PC-9 (cell line): ENCODE measurements at regions of chr5 and their contacts with region 1.

Region 1: DNA sequence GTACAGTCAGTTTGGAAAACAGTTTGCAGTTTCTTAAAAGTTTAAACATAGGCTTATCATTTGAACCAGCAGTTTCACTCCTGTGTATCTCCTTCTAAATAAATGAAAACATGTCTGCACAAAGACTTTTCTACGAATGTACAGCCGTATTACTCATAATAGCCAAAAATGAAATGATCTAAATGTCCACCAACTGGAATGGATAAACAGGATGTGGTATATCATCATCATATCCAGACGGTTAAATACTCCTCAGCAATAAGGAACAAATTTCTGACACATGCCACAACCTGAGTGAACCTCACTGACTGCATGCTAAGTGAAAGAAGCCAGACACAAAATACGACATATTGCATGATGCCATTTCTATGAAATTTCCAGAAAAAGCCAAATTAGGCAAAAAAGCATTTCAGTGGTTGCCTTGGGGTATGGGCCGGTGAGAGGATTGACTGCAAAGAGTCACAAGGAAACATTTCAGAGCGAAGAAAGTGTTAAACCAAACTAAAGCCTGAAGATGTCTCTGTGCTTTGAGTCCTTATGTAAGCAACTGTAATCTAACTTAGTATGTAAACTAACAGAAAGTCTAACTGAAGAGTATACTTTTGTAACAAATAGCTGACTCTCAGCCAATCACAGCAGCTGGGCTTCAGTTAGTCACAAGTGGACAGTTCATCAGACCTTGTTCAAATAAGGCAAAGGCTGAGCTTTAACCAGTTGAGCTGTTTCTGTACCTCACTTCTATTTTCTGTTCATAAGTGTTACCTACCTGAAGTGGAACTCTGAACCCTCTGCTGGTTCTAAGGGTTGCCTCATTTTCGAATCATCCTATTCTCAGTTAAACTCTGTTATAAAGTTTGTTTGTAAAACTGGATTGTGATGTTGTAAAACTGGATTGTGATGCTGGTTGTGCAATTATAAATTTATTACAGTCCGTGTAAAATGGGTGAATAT is 65.2 kb downstream of the TRIO start:
- DNase-seq: peak in 1 of 2 experiments; percentile 34
- H3K4me3 ChIP-seq: no peak overlapping the region
- H3K27ac ChIP-seq: peak overlapping the region; percentile 21; the same call in 1 of the 2 replicates
- H3K4me1 ChIP-seq: peaks cover 23% of the 10 kb centered on the region
- H3K27me3 ChIP-seq: no peaks in the 10 kb centered on the region
- CTCF ChIP-seq: no peak

Region 2: DNA sequence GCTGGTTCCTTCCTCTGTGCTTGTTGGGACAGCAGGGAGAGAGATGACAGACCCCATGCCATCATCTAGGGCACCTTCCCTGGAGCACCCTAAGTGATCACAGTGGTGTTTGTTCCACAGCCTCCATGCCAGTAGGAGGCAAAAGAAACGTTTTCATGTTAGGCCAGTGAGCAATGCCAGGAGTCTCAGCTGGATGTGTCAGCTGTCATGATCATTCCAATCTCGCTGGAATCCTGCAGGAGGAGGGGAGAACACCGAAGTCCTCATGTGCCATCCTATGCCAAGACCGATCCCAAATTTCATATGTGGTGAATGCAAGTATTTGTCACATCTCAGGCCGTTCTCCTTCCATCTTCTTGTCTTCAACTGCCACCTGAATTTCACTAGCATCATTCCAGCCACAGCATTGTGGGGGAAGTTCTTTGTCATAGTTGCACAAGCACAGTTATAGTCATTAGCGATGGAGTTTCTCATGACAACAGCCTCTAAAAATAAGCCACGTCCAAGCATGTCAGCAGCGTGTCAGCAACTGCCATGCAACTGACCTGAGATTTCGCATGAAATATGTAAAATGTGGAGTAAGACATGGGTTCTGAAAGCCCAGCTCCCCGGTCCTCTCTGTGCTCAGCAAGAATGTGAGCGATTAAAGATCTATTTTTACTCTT is 166.7 kb before region 1 on chr5:
- CTCF ChIA-PET with region 1: no interaction called
- POLR2A ChIA-PET with region 1: no interaction called
- intact Hi-C with region 1: no loop called
- DNase-seq: no peak
- H3K4me3 ChIP-seq: no peak overlapping the region
- H3K27ac ChIP-seq: no peak overlapping the region
- H3K4me1 ChIP-seq: peaks cover 46% of the 10 kb centered on the region
- H3K27me3 ChIP-seq: no peaks in the 10 kb centered on the region
- CTCF ChIP-seq: no peak

Region 3: DNA sequence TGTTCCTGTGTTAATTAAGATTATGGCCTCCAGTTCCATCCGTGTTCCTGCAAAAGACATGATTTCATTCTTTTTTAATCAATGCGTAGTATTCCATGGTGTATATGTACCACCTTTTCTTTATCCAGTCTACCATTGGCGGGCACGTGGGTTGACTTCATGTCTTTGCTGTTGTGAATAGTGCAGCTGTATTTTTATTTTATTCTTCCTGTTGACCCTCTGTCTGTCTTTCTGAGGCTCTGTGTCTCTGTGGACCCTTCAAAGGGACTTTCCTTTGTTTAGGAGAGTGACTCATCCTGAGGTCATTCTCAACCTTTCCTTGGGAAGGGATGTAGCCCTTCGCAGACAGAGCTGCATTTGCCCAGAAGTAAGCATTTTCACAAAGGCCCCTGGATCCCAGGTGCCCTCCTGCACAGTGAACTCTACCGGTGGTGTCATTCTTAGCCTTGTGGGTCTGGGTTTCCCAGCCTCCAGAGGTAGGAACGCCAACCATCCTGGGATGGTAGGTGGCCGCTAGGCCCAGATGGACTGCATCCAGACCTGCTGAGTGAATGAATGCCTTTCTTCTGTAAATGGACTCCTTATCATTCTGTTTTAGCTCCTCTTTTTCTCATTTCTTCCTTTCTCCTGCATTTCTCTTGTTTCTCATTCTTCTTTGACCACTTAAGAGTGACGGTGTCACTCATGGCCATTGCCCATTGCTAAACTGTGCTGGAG is 42.8 kb before region 1 on chr5:
- CTCF ChIA-PET with region 1: no interaction called
- POLR2A ChIA-PET with region 1: no interaction called
- intact Hi-C with region 1: loop called (anchors 2 kb)
- DNase-seq: peak; percentile 79 to 80
- H3K4me3 ChIP-seq: no peak overlapping the region
- H3K27ac ChIP-seq: peak overlapping the region; percentile 63
- H3K4me1 ChIP-seq: peaks cover 50% of the 10 kb centered on the region
- H3K27me3 ChIP-seq: no peaks in the 10 kb centered on the region
- CTCF ChIP-seq: no peak

Region 4: GRCh38 chr5:14560091-14560595 is 351.8 kb after region 1 on chr5:
- CTCF ChIA-PET with region 1: no interaction called
- POLR2A ChIA-PET with region 1: no interaction called
- intact Hi-C with region 1: no loop called
- DNase-seq: no peak
- H3K4me3 ChIP-seq: no peak overlapping the region
- H3K27ac ChIP-seq: no peak overlapping the region
- H3K4me1 ChIP-seq: no peaks in the 10 kb centered on the region
- H3K27me3 ChIP-seq: peaks cover 13% of the 10 kb centered on the region; the same call in 1 of the 2 replicates
- CTCF ChIP-seq: no peak

Region 5: DNA sequence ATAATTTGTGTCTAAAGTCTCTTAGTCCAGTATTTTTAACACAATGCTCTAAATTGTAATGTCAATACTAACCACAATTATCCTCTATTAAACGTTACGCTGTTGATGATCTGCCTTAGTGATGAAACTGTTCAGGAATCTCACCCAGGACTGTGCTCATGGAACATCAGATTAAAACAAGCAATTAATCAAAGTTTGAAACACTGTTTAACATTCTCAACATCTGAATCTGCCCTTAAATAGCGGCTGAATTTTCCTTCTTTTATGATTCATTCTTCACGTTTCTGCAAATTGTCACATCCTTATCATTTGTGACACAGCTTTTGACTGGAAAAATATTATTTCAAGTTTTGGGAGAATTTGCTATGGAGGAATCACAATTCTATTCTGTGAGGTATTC is 1857.5 kb after region 1 on chr5:
- CTCF ChIA-PET with region 1: no interaction called
- POLR2A ChIA-PET with region 1: no interaction called
- intact Hi-C with region 1: no loop called
- DNase-seq: no peak
- H3K4me3 ChIP-seq: no peak overlapping the region
- H3K27ac ChIP-seq: no peak overlapping the region
- H3K4me1 ChIP-seq: no peaks in the 10 kb centered on the region
- H3K27me3 ChIP-seq: peaks cover 82% of the 10 kb centered on the region; the same call in 1 of the 2 replicates
- CTCF ChIP-seq: no peak